ENCODE measurements at regions of chr5 and their contacts with region 1.

Region 1: GRCh38 chr5:15785531-15785981 is 285.6 kb downstream of the FBXL7 start:
- DNase-seq: no peak
- ATAC-seq: no peak
- H3K4me3 ChIP-seq: no peak overlapping the region
- H3K27ac ChIP-seq: no peak overlapping the region
- H3K4me1 ChIP-seq: peaks cover 0 to 43% (median 16%) of the 10 kb centered on the region in 12 donors
- H3K27me3 ChIP-seq: no peaks in the 10 kb centered on the region
- CTCF ChIP-seq: no peak
- POLR2A ChIP-seq: no peak

Region 2: GRCh38 chr5:15620501-15620900 is 165.1 kb before region 1 on chr5:
- intact Hi-C with region 1: loop called in 1 of 10 experiments (anchors 10 kb)
- DNase-seq: peak in 2 of 5 donors; percentile 35 to 52
- ATAC-seq: peak in 3 of 4 donors; percentile 54 to 60 (median 55)
- H3K4me3 ChIP-seq: no peak overlapping the region
- H3K27ac ChIP-seq: peak overlapping the region in 2 of 12 donors; percentile 22 to 58
- H3K4me1 ChIP-seq: peaks cover 0 to 33% (median 17%) of the 10 kb centered on the region in 12 donors
- H3K27me3 ChIP-seq: no peaks in the 10 kb centered on the region
- CTCF ChIP-seq: no peak
- POLR2A ChIP-seq: no peak